ENCODE measurements at regions of chr5 and their contacts with region 1.

Region 1: DNA sequence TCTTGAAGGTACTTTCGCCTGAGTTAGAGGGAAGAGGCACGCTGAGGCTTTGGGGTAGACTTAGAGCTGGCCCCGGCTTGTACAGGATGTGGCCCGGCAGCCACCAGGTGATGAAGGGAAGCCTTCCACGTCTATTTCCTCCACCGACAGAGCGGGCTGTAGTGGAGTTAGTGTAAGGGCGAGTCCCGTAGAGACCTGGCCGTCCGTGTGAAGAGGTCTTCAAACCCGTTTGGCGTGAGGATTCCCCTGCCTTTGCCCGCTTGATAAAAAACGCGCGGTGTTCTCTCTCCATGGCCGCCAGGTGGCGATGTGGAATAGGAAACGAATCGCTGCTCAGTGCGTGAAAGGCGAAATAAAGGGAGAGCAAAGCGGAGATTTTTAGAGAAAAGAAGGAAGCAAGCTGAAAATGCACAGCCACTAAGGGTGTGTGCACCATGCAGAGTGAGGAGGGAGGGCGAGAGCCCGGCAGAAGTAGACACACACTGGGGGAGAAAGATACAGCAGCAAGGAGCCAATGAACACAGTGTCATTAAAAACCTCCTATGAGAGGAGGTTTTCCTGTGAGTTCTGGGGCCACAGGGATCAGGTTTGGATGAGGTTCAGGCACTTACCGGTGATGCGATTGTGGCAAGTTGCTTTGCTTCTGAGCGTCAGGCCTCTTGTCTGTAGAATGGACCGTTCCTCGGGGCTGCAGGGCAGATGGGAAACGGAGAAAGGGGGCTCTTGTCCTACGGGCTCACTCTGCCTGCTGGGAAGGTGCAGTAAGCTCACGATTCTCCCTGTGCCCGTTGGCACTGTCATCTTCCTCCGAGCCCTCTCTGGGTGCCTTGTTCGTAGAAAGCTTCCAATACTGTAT is 34.2 kb downstream of the STC2 start:
- DNase-seq: peak; percentile 19
- H3K4me3 ChIP-seq: peak overlapping the region; percentile 39
- CTCF ChIP-seq: peak; percentile 80

Region 2: DNA sequence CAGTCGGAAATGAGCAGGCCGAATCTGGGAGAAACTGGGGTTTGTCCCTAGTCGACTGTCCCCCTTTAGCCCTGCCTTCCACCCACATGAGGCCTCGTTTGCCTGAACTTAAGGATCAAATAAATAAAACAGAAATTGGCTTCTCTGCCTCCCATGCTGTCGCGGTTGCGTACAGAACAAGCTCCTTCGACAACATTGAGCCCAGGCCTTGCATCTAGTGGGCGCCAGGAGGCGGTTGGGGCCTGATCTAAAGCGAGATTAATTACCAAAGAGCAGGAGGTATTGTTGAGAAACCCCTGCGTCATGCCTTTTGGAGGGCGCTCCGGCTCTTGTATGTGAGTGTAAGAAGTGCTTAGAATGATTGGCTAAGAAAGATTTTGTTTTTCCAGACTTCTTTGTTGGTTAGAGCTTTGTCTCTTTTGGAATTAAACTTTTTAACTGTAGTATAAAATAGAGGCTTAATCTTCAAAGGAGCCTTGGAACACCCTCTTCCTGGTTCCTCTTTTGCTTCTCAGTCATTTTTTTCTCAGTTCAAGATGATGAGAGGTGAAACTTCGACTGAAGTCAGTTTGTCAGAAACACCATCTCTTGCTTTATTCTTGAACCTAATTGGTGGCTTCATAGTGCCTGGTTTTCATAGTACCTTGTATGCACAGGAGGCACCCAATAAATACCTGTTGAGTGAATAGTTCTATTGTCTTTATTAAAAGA is 309.6 kb before region 1 on chr5:
- CTCF ChIA-PET with region 1: interaction called, 13 read pairs
- POLR2A ChIA-PET with region 1: no interaction called
- DNase-seq: peak; percentile 52
- H3K4me3 ChIP-seq: peak overlapping the region; percentile 99
- CTCF ChIP-seq: peak; percentile 74

Region 3: DNA sequence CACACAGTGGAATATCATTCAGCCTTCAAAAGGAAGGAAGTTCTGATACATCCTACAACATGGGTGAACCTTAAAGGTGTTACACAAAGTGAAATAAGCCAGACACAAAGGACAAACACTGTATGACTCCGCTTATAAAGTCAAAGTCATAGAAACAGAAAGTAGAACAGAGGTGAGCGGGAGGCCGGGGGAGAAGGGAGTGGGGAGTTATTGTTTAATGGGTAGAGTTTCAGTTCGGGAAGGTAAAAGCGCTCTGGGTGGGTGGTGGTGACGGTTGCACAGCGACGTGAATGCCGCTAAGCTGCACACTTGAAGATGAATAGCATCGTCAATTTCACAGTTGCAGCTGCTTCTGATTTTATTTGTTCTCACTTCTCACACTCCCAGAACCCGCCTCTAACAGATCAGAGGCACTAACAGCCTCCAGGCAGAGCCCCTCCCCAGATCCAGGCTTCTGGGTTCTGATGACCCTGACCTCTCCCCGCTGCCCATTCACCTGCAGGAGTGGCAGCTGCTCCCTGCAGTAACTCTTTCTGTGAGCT is 115.6 kb before region 1 on chr5:
- CTCF ChIA-PET with region 1: no interaction called
- POLR2A ChIA-PET with region 1: no interaction called
- DNase-seq: no peak
- H3K4me3 ChIP-seq: no peak overlapping the region
- CTCF ChIP-seq: no peak

Region 4: DNA sequence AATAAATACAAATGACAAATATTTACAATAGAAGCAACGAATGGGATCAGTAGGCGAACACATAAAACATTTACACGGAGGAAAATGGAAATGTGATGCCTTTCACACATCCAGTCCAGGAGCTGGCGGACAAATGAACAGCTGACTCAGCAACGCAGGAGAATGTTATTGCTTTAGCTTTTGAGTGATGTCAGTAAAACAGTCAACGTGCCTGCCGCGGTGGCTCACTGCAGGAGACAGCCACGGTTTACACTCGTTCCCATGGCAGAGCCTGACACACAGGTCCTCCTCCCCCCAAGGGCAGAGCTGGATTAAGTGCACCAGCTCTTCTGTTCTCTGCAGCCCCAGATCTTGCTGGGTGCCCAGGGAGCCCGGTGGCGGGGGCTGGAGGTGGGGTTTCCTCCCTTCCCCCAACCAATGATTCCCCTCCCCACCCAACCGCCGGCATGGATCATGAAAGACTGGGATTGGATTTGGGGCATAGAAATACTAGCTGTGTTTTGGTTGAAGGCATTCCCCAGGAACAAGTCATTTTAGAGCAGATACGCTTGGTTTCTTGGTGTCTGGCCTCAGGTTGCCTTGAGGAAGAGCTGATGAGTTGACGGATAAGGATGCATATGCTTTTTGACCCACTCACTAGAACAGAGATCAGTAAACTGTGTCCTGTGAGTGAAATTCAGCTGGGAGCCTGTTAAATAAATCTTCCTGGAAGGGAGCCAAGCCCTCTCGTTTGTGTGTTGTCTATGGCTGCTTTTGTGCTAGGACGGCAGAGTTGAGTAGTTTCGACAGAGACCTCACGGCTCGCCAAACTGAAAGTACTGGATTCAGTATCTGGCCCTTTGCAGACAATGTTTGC is 21.7 kb after region 1 on chr5:
- CTCF ChIA-PET with region 1: interaction called, 60 read pairs
- POLR2A ChIA-PET with region 1: no interaction called
- DNase-seq: no peak
- H3K4me3 ChIP-seq: no peak overlapping the region; the same call in 1 of the 2 replicates
- CTCF ChIP-seq: no peak

Region 5: DNA sequence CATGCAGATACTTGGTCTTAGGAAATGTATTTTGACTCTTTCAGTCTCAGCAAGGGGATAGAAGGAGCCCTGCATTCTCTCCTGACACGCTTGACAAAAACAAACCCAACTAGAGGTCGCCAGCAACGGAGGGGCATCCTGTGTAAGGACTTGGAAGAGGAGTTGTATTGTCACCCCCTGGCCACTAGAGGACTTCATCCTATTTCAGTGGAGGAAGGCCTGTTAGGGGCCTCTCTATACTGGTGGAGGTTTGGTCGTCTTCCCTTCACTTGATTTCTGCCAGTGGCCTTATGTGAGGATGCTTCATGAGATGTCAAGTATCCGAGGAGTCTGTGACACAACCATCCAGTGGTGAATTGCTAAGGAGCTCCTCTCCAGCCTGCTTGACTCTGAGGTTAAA is 157.0 kb after region 1 on chr5:
- CTCF ChIA-PET with region 1: interaction called, 10 read pairs
- POLR2A ChIA-PET with region 1: interaction called, 3 read pairs
- DNase-seq: no peak
- H3K4me3 ChIP-seq: no peak overlapping the region
- CTCF ChIP-seq: peak; percentile 19

Region 6: DNA sequence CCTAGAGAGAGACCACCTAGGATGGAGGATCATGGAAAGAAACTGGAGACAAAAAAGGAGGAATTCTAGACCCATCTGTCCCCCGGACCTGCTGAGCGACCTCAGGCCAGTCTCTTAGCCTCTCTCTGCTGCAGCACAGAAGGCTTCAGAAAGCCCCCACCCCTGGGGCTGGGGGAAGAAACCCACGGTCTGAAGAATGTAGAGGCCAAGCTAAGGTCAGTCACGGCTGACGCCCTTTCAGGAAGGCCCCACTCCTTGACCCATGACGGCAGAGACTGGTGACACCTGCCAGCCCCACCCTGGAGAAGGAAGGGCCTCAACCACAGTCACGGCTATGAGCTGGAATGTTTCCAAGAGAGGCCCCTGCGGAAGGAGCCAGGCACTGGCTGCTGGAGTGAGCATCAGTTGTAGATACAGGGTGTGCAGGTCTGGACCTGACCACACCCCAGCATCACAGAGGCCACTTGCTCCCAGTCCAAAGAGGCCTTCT is 442.9 kb after region 1 on chr5:
- CTCF ChIA-PET with region 1: no interaction called
- POLR2A ChIA-PET with region 1: no interaction called
- DNase-seq: no peak
- H3K4me3 ChIP-seq: no peak overlapping the region
- CTCF ChIP-seq: no peak

Region 7: GRCh38 chr5:174317259-174317894 is 1023.3 kb after region 1 on chr5:
- CTCF ChIA-PET with region 1: interaction called, 14 read pairs
- POLR2A ChIA-PET with region 1: no interaction called
- DNase-seq: no peak
- H3K4me3 ChIP-seq: no peak overlapping the region
- CTCF ChIP-seq: peak; percentile 93